ENCODE measurements at regions of chr5 and their contacts with region 1.

Region 1: DNA sequence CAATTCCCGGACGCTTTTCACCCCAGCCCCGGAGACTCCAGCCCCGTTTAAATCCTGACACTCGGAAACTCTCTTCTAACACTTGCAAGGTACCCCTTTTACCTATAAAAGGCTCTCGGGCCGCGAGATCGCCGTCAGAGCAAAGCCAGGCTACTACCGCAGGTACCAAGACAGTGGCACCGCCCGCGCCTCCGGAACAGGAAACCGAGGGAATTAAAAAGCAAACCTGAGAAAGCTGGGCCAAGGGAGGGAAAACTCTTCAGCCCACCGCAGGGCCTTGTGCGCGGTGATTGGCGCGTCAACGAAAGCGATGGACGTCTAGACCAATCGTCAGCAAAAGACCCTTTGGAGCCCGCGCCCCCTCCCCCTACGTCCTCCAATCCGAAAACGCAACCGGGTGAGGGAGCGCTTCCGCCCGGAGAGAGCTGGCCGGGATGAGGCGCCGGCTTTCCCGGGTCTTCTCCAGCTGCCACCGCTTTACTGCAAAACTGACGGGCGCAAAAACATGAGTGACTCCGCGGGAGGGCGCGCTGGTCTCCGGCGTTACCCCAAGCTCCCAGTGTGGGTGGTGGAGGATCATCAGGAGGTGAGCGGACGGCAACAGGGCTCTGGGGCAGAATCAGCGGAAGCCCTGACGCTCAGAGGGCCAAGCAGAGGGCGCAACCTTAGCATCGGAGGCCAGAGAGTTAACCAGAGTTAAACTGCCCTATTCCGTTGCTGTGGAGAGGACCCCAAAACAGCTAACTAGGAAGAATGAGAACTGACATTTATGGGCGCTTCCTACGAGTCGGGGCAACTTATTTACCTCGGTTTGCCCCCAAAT is at the starts of genes C5orf22 and DROSHA:
- DNase-seq: peak; percentile 81
- ATAC-seq: peak; percentile 98
- H3K4me3 Mint-ChIP-seq: peak within 1 kb of the TSS; percentile 99
- H3K27ac Mint-ChIP-seq: peak within 1 kb of the TSS; percentile 92
- H3K4me1 Mint-ChIP-seq: peaks cover 43% of the 10 kb centered on the region
- H3K27me3 Mint-ChIP-seq: no peaks in the 10 kb centered on the region
- CTCF ChIP-seq: no peak
- total RNA-seq, gene C5orf22: 27.0 and 27.1 TPM in 2 replicates
- total RNA-seq, gene DROSHA: 53.8 and 59.8 TPM in 2 replicates

Region 2: GRCh38 chr5:31638748-31639418 is 106.8 kb after region 1 on chr5 and contains the start of gene PDZD2:
- CTCF ChIA-PET with region 1: no interaction called
- POLR2A ChIA-PET with region 1: no interaction called
- intact Hi-C with region 1: loop called (anchors 5 kb)
- DNase-seq: peak; percentile 59
- ATAC-seq: peak; percentile 76
- H3K4me3 Mint-ChIP-seq: peak within 1 kb of the TSS; percentile 86
- H3K27ac Mint-ChIP-seq: peak within 1 kb of the TSS; percentile 67
- H3K4me1 Mint-ChIP-seq: peaks cover 19% of the 10 kb centered on the region
- H3K27me3 Mint-ChIP-seq: peaks cover 8% of the 10 kb centered on the region
- CTCF ChIP-seq: no peak
- total RNA-seq, gene PDZD2: 0.12 and 0.38 TPM in 2 replicates

Region 3: DNA sequence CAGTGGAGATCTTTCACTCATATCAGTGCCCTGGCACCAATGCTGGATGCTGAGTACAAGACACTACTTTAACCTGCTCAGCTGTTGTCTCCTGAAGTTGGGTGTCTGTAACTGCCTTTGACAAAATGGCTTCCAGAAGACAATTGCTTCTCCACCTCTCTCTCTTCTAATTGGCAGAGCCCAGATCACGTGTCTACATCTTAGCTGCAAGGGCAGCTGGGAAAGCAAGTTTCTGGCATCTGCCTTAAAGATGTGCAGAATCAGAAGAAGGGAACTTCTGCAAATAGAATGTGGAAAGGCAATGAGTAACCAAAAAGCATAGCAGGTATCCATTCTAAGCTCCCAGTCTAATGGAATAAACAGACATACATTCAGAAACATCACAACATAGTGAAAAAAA is 187.9 kb after region 1 on chr5:
- CTCF ChIA-PET with region 1: no interaction called
- POLR2A ChIA-PET with region 1: no interaction called
- intact Hi-C with region 1: no loop called
- DNase-seq: no peak
- ATAC-seq: no peak
- H3K4me3 Mint-ChIP-seq: no peak overlapping the region
- H3K27ac Mint-ChIP-seq: no peak overlapping the region
- H3K4me1 Mint-ChIP-seq: no peaks in the 10 kb centered on the region
- H3K27me3 Mint-ChIP-seq: peaks cover 2% of the 10 kb centered on the region
- CTCF ChIP-seq: no peak